Heart right ventricle (tissue), 16 donors: ENCODE measurements at regions of chr2 and their contacts with region 1.

Region 1: GRCh38 chr2:46719487-46719886 is 196.1 kb downstream of the MCFD2 start:
- DNase-seq: no peak
- ATAC-seq: peak in 5 of 8 donors; percentile 29 to 65 (median 55)
- H3K4me3 ChIP-seq: no peak overlapping the region
- H3K27ac ChIP-seq: peak overlapping the region in 1 of 10 donors; percentile 1
- H3K4me1 ChIP-seq: peaks cover 11 to 72% (median 66%) of the 10 kb centered on the region in 9 donors
- H3K27me3 ChIP-seq: no peaks in the 10 kb centered on the region
- CTCF ChIP-seq: no peak

Region 2: DNA sequence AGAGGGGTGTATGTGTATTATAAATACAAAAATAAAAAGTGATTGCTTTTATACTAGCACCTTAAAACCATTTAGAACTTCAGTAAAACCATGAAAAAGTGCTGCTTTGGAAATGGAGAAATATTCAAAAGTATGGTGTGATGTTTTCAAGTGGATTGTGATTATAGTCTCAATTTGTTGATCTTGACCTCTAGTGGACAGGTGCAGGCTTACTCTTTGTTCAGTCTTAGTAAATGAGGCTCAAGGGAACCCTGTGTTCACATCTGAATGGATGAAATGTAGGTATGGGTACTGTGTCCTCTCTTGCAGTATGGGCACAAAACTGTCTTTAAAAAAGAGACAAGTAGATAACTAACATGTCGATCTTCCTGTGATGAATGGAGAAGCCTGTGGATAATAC is 50.3 kb after region 1 on chr2:
- intact Hi-C with region 1: loop called in 1 of 10 experiments (anchors 10 kb)
- DNase-seq: no peak
- ATAC-seq: no peak
- H3K4me3 ChIP-seq: no peak overlapping the region
- H3K27ac ChIP-seq: no peak overlapping the region
- H3K4me1 ChIP-seq: no peaks in the 10 kb centered on the region
- H3K27me3 ChIP-seq: no peaks in the 10 kb centered on the region
- CTCF ChIP-seq: no peak